ENCODE measurements at regions of chr22 and their contacts with region 1.

Region 1: DNA sequence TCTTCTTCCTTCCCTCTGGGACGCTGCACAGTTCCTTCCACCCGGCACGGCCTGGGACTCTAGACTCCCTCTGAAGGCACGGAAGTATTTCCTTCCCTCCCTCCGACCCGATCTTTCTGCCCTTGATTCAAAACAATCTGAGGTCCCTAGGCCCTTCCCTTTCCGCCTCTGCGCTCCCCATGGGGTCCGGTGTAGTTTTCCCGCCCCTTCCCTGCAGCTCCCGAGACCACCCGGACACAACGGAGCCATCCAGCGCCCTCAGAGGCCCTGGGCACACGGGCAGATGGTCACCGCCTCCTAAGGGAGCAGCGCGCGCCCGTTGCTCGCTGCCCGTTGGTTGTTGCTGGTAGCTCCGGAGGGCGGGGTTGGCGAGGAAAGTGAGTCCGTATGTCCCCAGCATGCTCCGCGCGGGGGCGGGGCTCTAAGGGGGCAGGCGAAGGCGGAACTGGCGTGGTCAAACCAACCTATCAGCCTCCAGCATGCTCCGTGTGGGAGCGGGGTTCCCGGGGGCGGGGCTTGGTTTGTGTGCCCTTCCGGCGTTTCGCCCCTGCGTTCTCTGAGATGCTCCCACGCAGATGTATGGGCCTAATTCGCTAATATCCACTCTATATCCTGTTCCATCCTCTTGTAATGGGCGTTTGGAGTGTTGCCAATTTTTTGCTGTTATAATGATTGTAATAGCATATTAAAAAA is 19.6 kb downstream of the MIF start:
- DNase-seq: peak; percentile 97
- ATAC-seq: peak; percentile 99
- H3K4me3 Mint-ChIP-seq: peak overlapping the region; percentile 96
- H3K27ac Mint-ChIP-seq: peak overlapping the region; percentile 96
- H3K4me1 Mint-ChIP-seq: peaks cover 29% of the 10 kb centered on the region
- H3K27me3 Mint-ChIP-seq: no peaks in the 10 kb centered on the region
- CTCF ChIP-seq: no peak

Region 2: GRCh38 chr22:23696326-23696851 is 217.4 kb before region 1 on chr22:
- CTCF ChIA-PET with region 1: no interaction called
- POLR2A ChIA-PET with region 1: no interaction called
- intact Hi-C with region 1: no loop called
- DNase-seq: peak; percentile 52
- ATAC-seq: peak; percentile 99
- H3K4me3 Mint-ChIP-seq: peak overlapping the region; percentile 75
- H3K27ac Mint-ChIP-seq: peak overlapping the region; percentile 95
- H3K4me1 Mint-ChIP-seq: peaks cover 27% of the 10 kb centered on the region
- H3K27me3 Mint-ChIP-seq: no peaks in the 10 kb centered on the region
- CTCF ChIP-seq: no peak

Region 3: DNA sequence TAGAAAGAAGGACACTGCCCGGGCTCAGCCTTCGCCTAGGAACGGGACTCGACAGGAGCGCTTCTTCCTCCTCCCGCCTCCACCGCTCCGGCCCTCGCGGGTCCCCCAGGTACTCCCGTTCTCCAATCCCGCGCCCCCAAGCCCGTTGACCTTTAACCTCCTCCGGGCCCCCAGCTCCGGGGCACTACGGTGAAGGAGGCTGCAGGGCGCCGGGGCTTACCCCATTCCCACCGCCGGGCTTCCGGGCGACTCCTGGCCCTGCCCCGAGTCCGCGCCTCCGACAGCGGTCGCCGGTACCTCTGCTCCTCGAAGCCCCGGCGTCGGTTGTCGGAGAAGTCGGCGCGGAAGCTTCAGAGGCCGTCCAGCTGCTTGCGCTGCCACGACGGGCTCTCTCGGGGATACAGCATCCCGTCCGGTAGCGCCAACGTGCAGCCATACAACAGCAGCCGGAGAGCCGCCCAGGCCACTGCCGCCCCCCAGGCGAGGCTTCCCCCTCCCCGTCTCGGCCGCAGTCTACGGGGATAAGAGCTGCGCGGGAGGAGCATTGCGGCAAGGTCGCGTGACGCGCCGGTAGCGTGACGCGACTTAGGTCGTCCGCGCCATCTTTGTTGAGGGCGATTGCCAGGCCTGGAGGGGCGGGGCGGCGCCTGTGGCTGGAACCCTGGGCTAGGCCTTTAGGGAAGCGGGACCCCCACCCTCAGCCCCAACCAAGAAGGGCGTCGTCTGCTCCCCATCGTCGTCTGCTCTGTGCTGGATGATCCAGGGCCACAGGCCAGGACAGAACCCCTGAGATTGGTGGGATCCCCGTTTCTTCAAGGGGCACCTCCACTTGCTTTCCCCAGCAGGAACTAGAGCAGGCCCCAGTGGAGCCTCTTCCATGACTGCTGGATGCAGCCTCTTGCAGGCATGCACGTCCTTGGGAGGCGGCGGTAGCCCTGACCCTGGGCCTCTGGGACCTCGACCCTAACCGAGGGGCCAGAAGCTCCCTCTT is 196.7 kb before region 1 on chr22:
- CTCF ChIA-PET with region 1: no interaction called
- POLR2A ChIA-PET with region 1: no interaction called
- intact Hi-C with region 1: loop called (anchors 1 kb)
- DNase-seq: peak; percentile 81
- ATAC-seq: peak; percentile 97
- H3K4me3 Mint-ChIP-seq: peak overlapping the region; percentile 81
- H3K27ac Mint-ChIP-seq: peak overlapping the region; percentile 69
- H3K4me1 Mint-ChIP-seq: peaks cover 16% of the 10 kb centered on the region
- H3K27me3 Mint-ChIP-seq: no peaks in the 10 kb centered on the region
- CTCF ChIP-seq: no peak

Region 4: GRCh38 chr22:23786752-23787599 is 126.8 kb before region 1 on chr22 and contains the start of gene SMARCB1:
- CTCF ChIA-PET with region 1: no interaction called
- POLR2A ChIA-PET with region 1: no interaction called
- intact Hi-C with region 1: loop called (anchors 5 kb)
- DNase-seq: peak; percentile 89
- ATAC-seq: peak; percentile 85
- H3K4me3 Mint-ChIP-seq: peak within 1 kb of the TSS; percentile 90
- H3K27ac Mint-ChIP-seq: peak within 1 kb of the TSS; percentile 88
- H3K4me1 Mint-ChIP-seq: peaks cover 51% of the 10 kb centered on the region
- H3K27me3 Mint-ChIP-seq: no peaks in the 10 kb centered on the region
- CTCF ChIP-seq: no peak
- total RNA-seq, gene SMARCB1: 156 and 161 TPM in 2 replicates

Region 5: DNA sequence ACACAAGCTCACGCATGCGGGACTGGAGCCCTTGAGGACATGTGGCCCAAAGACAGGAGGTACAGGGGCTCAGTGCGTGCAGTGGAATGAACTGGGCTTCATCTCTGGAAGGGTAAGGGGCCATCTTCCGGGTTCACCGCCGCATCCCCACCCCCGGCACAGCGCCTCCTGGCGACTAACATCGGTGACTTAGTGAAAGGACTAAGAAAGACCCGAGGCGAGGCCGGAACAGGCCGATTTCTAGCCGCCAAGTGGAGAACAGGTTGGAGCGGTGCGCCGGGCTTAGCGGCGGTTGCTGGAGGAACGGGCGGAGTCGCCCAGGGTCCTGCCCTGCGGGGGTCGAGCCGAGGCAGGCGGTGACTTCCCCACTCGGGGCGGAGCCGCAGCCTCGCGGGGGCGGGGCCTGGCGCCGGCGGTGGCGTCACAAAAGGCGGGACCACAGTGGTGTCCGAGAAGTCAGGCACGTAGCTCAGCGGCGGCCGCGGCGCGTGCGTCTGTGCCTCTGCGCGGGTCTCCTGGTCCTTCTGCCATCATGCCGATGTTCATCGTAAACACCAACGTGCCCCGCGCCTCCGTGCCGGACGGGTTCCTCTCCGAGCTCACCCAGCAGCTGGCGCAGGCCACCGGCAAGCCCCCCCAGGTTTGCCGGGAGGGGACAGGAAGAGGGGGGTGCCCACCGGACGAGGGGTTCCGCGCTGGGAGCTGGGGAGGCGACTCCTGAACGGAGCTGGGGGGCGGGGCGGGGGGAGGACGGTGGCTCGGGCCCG is 19.7 kb before region 1 on chr22 and contains the start of gene MIF:
- CTCF ChIA-PET with region 1: interaction called, 8 read pairs
- POLR2A ChIA-PET with region 1: interaction called, 62 read pairs
- intact Hi-C with region 1: loop called (anchors 1 kb)
- DNase-seq: peak; percentile 100
- ATAC-seq: peak; percentile 88
- H3K4me3 Mint-ChIP-seq: peak within 1 kb of the TSS; percentile 96
- H3K27ac Mint-ChIP-seq: peak within 1 kb of the TSS; percentile 96
- H3K4me1 Mint-ChIP-seq: peaks cover 25% of the 10 kb centered on the region
- H3K27me3 Mint-ChIP-seq: no peaks in the 10 kb centered on the region
- CTCF ChIP-seq: peak; percentile 44
- total RNA-seq, gene MIF: 308 and 349 TPM in 2 replicates

Region 6: GRCh38 chr22:24011735-24012068 is 97.9 kb after region 1 on chr22:
- CTCF ChIA-PET with region 1: no interaction called
- POLR2A ChIA-PET with region 1: interaction called, 5 read pairs
- intact Hi-C with region 1: loop called (anchors 5 kb)
- DNase-seq: no peak
- ATAC-seq: no peak
- H3K4me3 Mint-ChIP-seq: peak overlapping the region; percentile 98
- H3K27ac Mint-ChIP-seq: peak overlapping the region; percentile 88
- H3K4me1 Mint-ChIP-seq: peaks cover 23% of the 10 kb centered on the region
- H3K27me3 Mint-ChIP-seq: no peaks in the 10 kb centered on the region
- CTCF ChIP-seq: no peak

Region 7: DNA sequence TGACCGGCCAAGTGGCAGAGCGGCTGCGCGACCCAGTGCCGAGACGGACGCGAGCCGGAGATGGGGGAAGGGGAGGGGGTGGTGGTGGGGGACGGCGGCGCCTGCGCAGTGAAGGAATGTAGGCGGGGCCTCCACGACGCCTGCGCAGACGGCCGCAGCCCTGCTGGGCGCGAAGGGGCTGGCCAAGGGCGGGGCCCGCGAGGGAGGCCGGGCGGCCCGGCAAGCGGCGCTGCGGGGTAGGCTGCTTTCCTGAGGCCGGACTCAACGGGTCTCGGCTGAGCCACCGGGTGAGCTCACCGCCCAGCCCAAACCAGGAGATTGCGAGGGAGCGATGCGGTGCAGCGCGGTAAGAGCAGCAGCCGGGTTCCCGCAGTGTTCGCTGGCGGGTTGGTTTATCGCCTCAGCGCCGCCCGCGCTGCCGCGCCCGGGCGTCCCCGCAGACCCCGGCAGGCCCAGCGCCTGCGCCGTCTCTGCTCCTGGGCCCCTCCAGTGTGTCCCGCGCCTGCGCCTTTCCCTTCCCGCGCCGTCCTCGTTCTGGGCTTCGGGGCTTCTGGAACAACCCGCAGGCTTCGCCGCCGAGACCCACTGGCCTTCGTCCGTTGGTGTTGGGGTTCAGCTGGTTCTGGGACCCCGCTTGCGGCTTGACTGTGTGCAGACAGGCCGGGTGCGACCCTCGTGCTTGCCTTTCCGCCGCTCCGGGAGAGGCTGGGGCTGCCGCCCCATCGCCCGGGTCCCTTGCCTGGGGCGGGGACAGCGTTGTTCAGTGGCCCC is 357.0 kb after region 1 on chr22 and contains the start of gene SPECC1L:
- CTCF ChIA-PET with region 1: no interaction called
- POLR2A ChIA-PET with region 1: interaction called, 4 read pairs
- intact Hi-C with region 1: loop called (anchors 10 kb)
- DNase-seq: peak; percentile 96
- ATAC-seq: peak; percentile 90
- H3K4me3 Mint-ChIP-seq: peak within 1 kb of the TSS; percentile 90
- H3K27ac Mint-ChIP-seq: peak within 1 kb of the TSS; percentile 82
- H3K4me1 Mint-ChIP-seq: peaks cover 45% of the 10 kb centered on the region
- H3K27me3 Mint-ChIP-seq: no peaks in the 10 kb centered on the region
- CTCF ChIP-seq: no peak
- total RNA-seq, gene SPECC1L: 59.0 and 64.5 TPM in 2 replicates

Region 8: GRCh38 chr22:24555157-24556039 is 641.6 kb after region 1 on chr22 and contains the start of gene SNRPD3:
- CTCF ChIA-PET with region 1: no interaction called
- POLR2A ChIA-PET with region 1: interaction called, 4 read pairs
- intact Hi-C with region 1: loop called (anchors 1 kb)
- DNase-seq: peak; percentile 94
- ATAC-seq: peak; percentile 83
- H3K4me3 Mint-ChIP-seq: peak within 1 kb of the TSS; percentile 99
- H3K27ac Mint-ChIP-seq: peak within 1 kb of the TSS; percentile 96
- H3K4me1 Mint-ChIP-seq: peaks cover 85% of the 10 kb centered on the region
- H3K27me3 Mint-ChIP-seq: no peaks in the 10 kb centered on the region
- CTCF ChIP-seq: no peak
- total RNA-seq, gene SNRPD3: 96.5 and 98.6 TPM in 2 replicates

Measured in activated B cell treated with CpG ODN at 0.5 μM for 24 hours (primary cell).